ENCODE measurements at regions of chr2 and their contacts with region 1.

Region 1: GRCh38 chr2:209556354-209556961 is 132.6 kb downstream of the MAP2 start:
- DNase-seq: peak; percentile 73
- ATAC-seq: peak; percentile 94
- H3K4me3 ChIP-seq: no peak overlapping the region
- H3K27ac ChIP-seq: no peak overlapping the region
- H3K4me1 ChIP-seq: no peaks in the 10 kb centered on the region
- H3K27me3 ChIP-seq: no peaks in the 10 kb centered on the region
- CTCF ChIP-seq: peak; percentile 80

Region 2: DNA sequence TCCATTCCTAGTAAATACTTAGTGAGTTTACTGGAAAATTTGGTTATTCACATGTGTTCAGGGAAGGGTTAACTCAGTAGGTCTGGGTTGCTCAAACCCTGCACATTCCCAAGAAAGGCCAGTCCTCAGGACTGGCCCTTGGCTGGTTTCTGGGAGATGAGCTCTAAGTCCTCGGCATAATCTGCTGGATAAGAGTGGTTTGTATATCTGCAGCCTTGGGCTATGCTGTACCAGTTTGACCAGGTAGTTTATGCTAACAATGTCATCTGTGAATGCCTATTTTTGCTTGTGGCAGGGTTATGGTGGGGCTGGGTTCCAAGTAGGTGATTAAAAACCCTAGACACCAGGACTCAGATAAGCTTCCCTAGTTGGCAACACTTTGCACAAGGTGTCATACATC is 1157.3 kb before region 1 on chr2:
- CTCF ChIA-PET with region 1: no interaction called
- POLR2A ChIA-PET with region 1: no interaction called
- intact Hi-C with region 1: loop called (anchors 5 kb)
- DNase-seq: peak; percentile 18
- ATAC-seq: no peak
- H3K4me3 ChIP-seq: no peak overlapping the region
- H3K27ac ChIP-seq: no peak overlapping the region
- H3K4me1 ChIP-seq: no peaks in the 10 kb centered on the region
- H3K27me3 ChIP-seq: peaks cover 37% of the 10 kb centered on the region; the same call in 1 of the 2 replicates
- CTCF ChIP-seq: no peak

Region 3: DNA sequence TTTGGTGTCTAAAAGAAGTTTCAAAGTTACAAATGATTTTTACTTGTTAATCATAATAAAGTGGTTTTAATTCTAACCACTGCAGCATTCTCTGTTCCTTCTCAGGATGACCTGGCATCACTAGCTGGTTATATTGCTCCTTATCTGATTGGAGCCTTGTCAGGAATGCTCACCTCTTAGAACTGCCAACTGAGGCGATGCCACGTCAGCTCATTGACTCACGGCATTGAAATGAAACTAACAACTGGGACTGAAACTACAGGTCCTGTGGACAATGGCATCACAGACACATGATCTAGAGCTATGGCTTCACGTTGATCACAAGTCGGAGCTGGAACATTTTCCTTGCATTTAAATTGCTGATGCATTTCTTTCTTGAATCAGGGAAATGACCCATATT is 187.6 kb before region 1 on chr2:
- CTCF ChIA-PET with region 1: no interaction called
- POLR2A ChIA-PET with region 1: no interaction called
- intact Hi-C with region 1: no loop called
- DNase-seq: peak; percentile 99
- ATAC-seq: peak; percentile 94
- H3K4me3 ChIP-seq: peak overlapping the region; percentile 38
- H3K27ac ChIP-seq: peak overlapping the region; percentile 91
- H3K4me1 ChIP-seq: peaks cover 33% of the 10 kb centered on the region
- H3K27me3 ChIP-seq: no peaks in the 10 kb centered on the region
- CTCF ChIP-seq: no peak